Adrenal gland (tissue), 19 donors: ENCODE measurements at regions of chr6 and their contacts with region 1.

Region 1: GRCh38 chr6:43369174-43370022 is at the start of gene ZNF318:
- DNase-seq: peak; percentile 95 to 98 (median 96)
- H3K4me3 ChIP-seq: peak within 1 kb of the TSS in 3 of 4 donors; percentile 22 to 93 (median 66)
- H3K27ac ChIP-seq: peak within 1 kb of the TSS in 4 of 5 donors; percentile 15 to 95 (median 76)
- H3K4me1 ChIP-seq: peaks cover 0 to 22% of the 10 kb centered on the region in 2 donors
- H3K27me3 ChIP-seq: no peaks in the 10 kb centered on the region
- CTCF ChIP-seq: no peak
- POLR2A ChIP-seq: peak; percentile 29 to 56
- total RNA-seq, gene ZNF318: 10.1 to 19.3 (median 13.9) TPM

Region 2: GRCh38 chr6:43427406-43428111 is 58.2 kb after region 1 on chr6 and contains the start of gene ABCC10:
- intact Hi-C with region 1: loop called in 1 of 2 experiments (anchors 5 kb)
- DNase-seq: peak; percentile 94 to 98 (median 97)
- H3K4me3 ChIP-seq: peak within 1 kb of the TSS; percentile 59 to 94 (median 68)
- H3K27ac ChIP-seq: peak within 1 kb of the TSS; percentile 79 to 96 (median 81)
- H3K4me1 ChIP-seq: peaks cover 13 to 19% of the 10 kb centered on the region in 2 donors
- H3K27me3 ChIP-seq: no peaks in the 10 kb centered on the region
- CTCF ChIP-seq: peak; percentile 26 to 64 (median 46)
- POLR2A ChIP-seq: peak; percentile 48 to 66
- total RNA-seq, gene ABCC10: 19.1 to 40.0 (median 24.2) TPM